ENCODE measurements at regions of chr3 and their contacts with region 1.

Region 1: GRCh38 chr3:177041021-177041729 is 156.1 kb downstream of the TBL1XR1 start:
- DNase-seq: no peak
- ATAC-seq: no peak
- H3K4me3 ChIP-seq: no peak overlapping the region
- H3K4me3 Mint-ChIP-seq: no peak overlapping the region
- H3K27ac ChIP-seq: no peak overlapping the region
- H3K27ac Mint-ChIP-seq: peak overlapping the region; percentile 21
- H3K4me1 ChIP-seq: peaks cover 9% of the 10 kb centered on the region
- H3K4me1 Mint-ChIP-seq: peaks cover 36% of the 10 kb centered on the region
- H3K27me3 ChIP-seq: no peaks in the 10 kb centered on the region
- H3K27me3 Mint-ChIP-seq: no peaks in the 10 kb centered on the region
- CTCF ChIP-seq: no peak

Region 2: GRCh38 chr3:177673112-177673914 is 632.1 kb after region 1 on chr3:
- CTCF ChIA-PET with region 1: no interaction called
- POLR2A ChIA-PET with region 1: no interaction called
- intact Hi-C with region 1: loop called in 1 of 2 experiments (anchors 5 kb)
- DNase-seq: no peak
- ATAC-seq: no peak
- H3K4me3 ChIP-seq: no peak overlapping the region
- H3K4me3 Mint-ChIP-seq: no peak overlapping the region
- H3K27ac ChIP-seq: no peak overlapping the region
- H3K27ac Mint-ChIP-seq: no peak overlapping the region
- H3K4me1 ChIP-seq: no peaks in the 10 kb centered on the region
- H3K4me1 Mint-ChIP-seq: no peaks in the 10 kb centered on the region
- H3K27me3 ChIP-seq: no peaks in the 10 kb centered on the region
- H3K27me3 Mint-ChIP-seq: no peaks in the 10 kb centered on the region
- CTCF ChIP-seq: no peak

Region 3: GRCh38 chr3:178155521-178155920 is 1114.3 kb after region 1 on chr3:
- CTCF ChIA-PET with region 1: no interaction called
- POLR2A ChIA-PET with region 1: no interaction called
- intact Hi-C with region 1: loop called in 1 of 2 experiments (anchors 10 kb)
- DNase-seq: peak in 1 of 14 experiments; percentile 7
- ATAC-seq: no peak
- H3K4me3 ChIP-seq: no peak overlapping the region
- H3K4me3 Mint-ChIP-seq: no peak overlapping the region
- H3K27ac ChIP-seq: no peak overlapping the region
- H3K27ac Mint-ChIP-seq: no peak overlapping the region
- H3K4me1 ChIP-seq: no peaks in the 10 kb centered on the region
- H3K4me1 Mint-ChIP-seq: no peaks in the 10 kb centered on the region
- H3K27me3 ChIP-seq: no peaks in the 10 kb centered on the region
- H3K27me3 Mint-ChIP-seq: no peaks in the 10 kb centered on the region
- CTCF ChIP-seq: no peak

Region 4: GRCh38 chr3:178325330-178325729 is 1284.2 kb after region 1 on chr3:
- CTCF ChIA-PET with region 1: no interaction called
- POLR2A ChIA-PET with region 1: no interaction called
- intact Hi-C with region 1: loop called in 1 of 2 experiments (anchors 5 kb)
- DNase-seq: peak in 1 of 14 experiments; percentile 22
- ATAC-seq: no peak
- H3K4me3 ChIP-seq: no peak overlapping the region
- H3K4me3 Mint-ChIP-seq: no peak overlapping the region
- H3K27ac ChIP-seq: no peak overlapping the region
- H3K27ac Mint-ChIP-seq: no peak overlapping the region
- H3K4me1 ChIP-seq: no peaks in the 10 kb centered on the region
- H3K4me1 Mint-ChIP-seq: no peaks in the 10 kb centered on the region
- H3K27me3 ChIP-seq: no peaks in the 10 kb centered on the region
- H3K27me3 Mint-ChIP-seq: no peaks in the 10 kb centered on the region
- CTCF ChIP-seq: no peak

Region 5: DNA sequence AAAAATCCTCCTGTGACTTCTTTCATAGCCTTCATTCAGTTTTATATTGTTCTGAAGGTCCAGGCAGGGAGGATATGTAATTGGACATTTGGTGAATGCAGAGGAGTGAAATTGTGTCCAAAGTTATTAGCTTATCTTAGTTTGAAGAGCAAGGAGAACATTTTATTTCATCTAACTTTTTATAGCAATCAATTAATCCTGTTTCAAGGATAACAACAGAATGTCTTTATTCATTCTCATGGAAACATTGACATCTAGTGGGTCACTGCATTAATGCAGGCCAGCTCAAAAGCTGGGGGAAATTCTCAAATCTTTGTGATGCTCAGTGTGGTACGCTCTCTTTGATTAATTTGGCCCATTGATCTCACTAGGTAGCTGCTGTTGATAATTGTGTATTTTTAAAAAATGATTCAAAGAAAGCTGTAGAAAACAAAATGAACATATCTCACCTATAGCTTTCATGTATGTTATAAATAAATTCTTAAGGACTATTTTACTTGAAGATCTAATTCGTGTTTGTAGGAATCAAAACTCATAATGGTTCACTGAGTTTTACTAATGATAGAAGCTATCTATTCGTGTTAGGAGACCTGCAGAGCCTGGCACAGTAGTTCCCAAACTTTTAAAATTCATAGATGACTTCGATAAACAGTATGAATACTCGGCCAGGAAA is 1344.2 kb after region 1 on chr3:
- CTCF ChIA-PET with region 1: no interaction called
- POLR2A ChIA-PET with region 1: no interaction called
- intact Hi-C with region 1: loop called in 1 of 2 experiments (anchors 5 kb)
- DNase-seq: peak in 4 of 14 experiments; percentile 8 to 47 (median 38)
- ATAC-seq: peak; percentile 44
- H3K4me3 ChIP-seq: no peak overlapping the region
- H3K4me3 Mint-ChIP-seq: no peak overlapping the region
- H3K27ac ChIP-seq: no peak overlapping the region
- H3K27ac Mint-ChIP-seq: no peak overlapping the region
- H3K4me1 ChIP-seq: no peaks in the 10 kb centered on the region
- H3K4me1 Mint-ChIP-seq: no peaks in the 10 kb centered on the region
- H3K27me3 ChIP-seq: no peaks in the 10 kb centered on the region
- H3K27me3 Mint-ChIP-seq: peaks cover 24% of the 10 kb centered on the region
- CTCF ChIP-seq: peak; percentile 76

Measured in CD4-positive, alpha-beta T cell (primary cell).